Natural killer cell (primary cell): ENCODE measurements at regions of chr6 and their contacts with region 1.

Region 1: DNA sequence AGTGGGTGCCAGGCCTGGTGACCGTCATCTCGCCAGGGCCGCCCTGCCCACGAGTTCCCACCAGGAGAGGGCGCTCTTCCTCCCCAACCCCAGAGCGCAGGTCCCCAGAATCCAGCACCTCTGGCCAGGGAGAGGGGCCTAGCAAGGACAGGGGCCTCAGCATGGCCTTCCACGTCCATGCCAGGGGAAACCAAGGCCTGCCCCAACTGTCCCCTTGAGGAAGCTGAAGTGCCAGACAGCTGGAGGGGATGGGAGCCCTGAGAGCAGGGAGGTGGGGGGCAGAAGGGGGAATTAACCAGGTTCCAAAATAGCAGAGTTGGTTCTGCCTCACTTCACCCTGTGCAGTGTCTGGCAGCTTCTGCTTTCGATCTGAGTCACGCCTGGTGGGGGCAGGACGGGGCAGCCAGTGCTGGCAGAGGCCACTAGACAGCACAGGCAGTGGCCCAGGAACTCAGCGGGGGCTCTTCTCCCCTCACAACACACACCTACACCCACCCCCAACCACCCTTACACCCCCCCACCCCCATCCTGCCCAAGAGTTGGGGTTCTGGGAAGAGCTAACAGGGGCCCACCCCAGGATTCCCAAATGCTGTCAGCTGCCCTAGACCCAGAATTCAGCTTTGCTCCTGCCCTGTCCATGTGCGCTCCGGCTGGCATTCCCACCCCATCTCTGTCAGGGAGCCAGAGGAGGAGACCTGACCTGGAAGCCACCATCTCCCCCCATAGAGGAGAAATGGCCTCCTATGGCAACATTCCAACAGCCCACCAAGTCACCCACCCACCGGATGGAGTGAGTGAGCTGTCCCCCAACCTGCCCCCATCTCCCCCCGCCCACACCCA is 29.2 kb downstream of the TFEB start:
- DNase-seq: peak; percentile 74 to 79
- ATAC-seq: peak; percentile 91 to 96 (median 93)
- H3K4me3 ChIP-seq: no peak overlapping the region
- H3K4me3 Mint-ChIP-seq: peak overlapping the region; percentile 19
- H3K27ac ChIP-seq: peak overlapping the region; percentile 79
- H3K27ac Mint-ChIP-seq: peak overlapping the region; percentile 92 to 93
- H3K4me1 ChIP-seq: peaks cover 52% of the 10 kb centered on the region
- H3K4me1 Mint-ChIP-seq: peaks cover 50 to 78% of the 10 kb centered on the region in 2 donors
- H3K27me3 ChIP-seq: no peaks in the 10 kb centered on the region
- H3K27me3 Mint-ChIP-seq: no peaks in the 10 kb centered on the region
- CTCF ChIP-seq: peak; percentile 77

Region 2: DNA sequence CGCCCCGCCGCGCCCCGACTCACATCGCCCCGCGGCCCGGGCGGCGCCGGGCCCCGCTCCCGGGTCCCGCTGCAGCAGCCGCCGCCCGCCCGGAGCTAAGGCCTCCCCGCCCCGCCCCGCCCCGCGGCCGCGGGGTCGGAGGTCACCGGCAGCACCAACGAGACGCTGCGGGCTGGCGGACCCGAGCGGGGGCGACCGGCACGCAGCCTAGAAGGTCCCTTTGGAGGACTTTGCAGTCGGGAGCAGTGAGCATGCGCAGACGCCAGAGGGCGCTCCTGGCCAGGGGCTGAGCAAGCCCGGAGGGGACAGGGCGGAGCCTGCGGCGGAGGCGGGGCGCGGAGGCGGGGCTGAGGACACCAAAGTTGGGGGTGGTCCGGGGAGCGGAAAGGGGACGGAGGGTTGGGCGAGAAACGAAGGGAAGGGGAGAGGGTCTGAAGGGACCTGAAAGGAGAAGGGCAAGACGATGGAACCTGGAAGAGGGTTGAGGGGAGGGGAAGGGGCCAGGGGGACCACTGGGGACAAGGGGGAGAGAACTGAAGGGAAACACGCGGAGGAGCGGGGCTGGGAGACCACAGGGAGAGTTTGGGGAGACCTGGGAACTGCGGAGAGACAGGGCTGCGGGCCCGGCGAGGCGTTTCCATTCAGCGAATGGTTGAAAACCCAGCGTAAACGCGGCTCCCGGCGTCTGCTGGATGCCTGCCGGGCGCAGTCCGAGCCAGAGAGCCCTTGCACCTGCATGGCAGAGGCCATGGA is 73.8 kb after region 1 on chr6 and contains the start of gene FRS3:
- intact Hi-C with region 1: loop called (anchors 1 kb)
- DNase-seq: peak; percentile 99
- ATAC-seq: peak; percentile 96 to 100 (median 98)
- H3K4me3 ChIP-seq: peak within 1 kb of the TSS; percentile 40
- H3K4me3 Mint-ChIP-seq: peak within 1 kb of the TSS; percentile 92
- H3K27ac ChIP-seq: no peak within 1 kb of the TSS
- H3K27ac Mint-ChIP-seq: peak within 1 kb of the TSS in 1 of 2 donors; percentile 80
- H3K4me1 ChIP-seq: peaks cover 22% of the 10 kb centered on the region
- H3K4me1 Mint-ChIP-seq: peaks cover 7 to 22% of the 10 kb centered on the region in 2 donors
- H3K27me3 ChIP-seq: no peaks in the 10 kb centered on the region
- H3K27me3 Mint-ChIP-seq: peaks cover 0 to 3% of the 10 kb centered on the region in 2 donors
- CTCF ChIP-seq: peak; percentile 77
- total RNA-seq, gene FRS3: 4.5 to 5.7 (median 5.4) TPM